GM12878 (cell line): ENCODE measurements at regions of chr5 and their contacts with region 1.

Region 1: DNA sequence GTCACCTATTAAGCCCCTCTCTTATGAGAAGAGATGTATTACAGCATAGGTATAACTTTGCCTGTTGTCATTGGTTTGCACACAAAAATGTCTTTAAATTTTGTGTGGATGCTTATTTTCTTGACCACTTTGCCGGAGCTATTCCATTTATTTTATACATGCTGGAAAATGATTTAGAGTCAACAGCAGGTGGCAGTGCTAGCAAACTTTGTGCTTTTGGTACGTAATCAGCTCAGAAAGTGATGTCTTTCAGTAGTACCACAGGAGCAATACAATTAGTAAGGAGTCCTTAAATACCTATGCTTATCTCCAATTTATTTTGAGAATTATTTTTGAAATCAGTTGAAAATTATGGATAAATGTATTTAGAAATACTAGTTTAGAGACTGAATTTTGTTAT is 19.8 kb upstream of the NUDT12 start:
- DNase-seq: peak; percentile 5
- ATAC-seq: peak; percentile 63
- H3K4me3 ChIP-seq: no peak overlapping the region
- H3K27ac ChIP-seq: no peak overlapping the region
- H3K4me1 ChIP-seq: no peaks in the 10 kb centered on the region
- H3K27me3 ChIP-seq: no peaks in the 10 kb centered on the region
- CTCF ChIP-seq: peak; percentile 35 to 49 (median 42); a peak in 5 of 6 replicates
- EP300 ChIP-seq: no peak
- POLR2A ChIP-seq: no peak
- RAD21 ChIP-seq: peak; percentile 64

Region 2: GRCh38 chr5:103393101-103393754 is 189.1 kb before region 1 on chr5:
- CTCF ChIA-PET with region 1: no interaction called
- POLR2A ChIA-PET with region 1: no interaction called
- RAD21 ChIA-PET with region 1: no interaction called
- SMC1A ChIA-PET with region 1: no interaction called
- in situ Hi-C with region 1: no loop called
- intact Hi-C with region 1: no loop called
- DNase-seq: peak; percentile 3
- ATAC-seq: peak; percentile 31
- H3K4me3 ChIP-seq: no peak overlapping the region
- H3K27ac ChIP-seq: no peak overlapping the region
- H3K4me1 ChIP-seq: no peaks in the 10 kb centered on the region
- H3K27me3 ChIP-seq: peaks cover 0 to 2% of the 10 kb centered on the region in 2 experiments; a peak in 1 of 4 replicates
- CTCF ChIP-seq: no peak
- EP300 ChIP-seq: no peak
- POLR2A ChIP-seq: no peak
- RAD21 ChIP-seq: no peak

Region 3: GRCh38 chr5:103414622-103415021 is 167.7 kb before region 1 on chr5:
- CTCF ChIA-PET with region 1: no interaction called
- POLR2A ChIA-PET with region 1: no interaction called
- RAD21 ChIA-PET with region 1: no interaction called
- SMC1A ChIA-PET with region 1: no interaction called
- in situ Hi-C with region 1: no loop called
- intact Hi-C with region 1: no loop called
- DNase-seq: no peak
- ATAC-seq: no peak
- H3K4me3 ChIP-seq: no peak overlapping the region
- H3K27ac ChIP-seq: no peak overlapping the region
- H3K4me1 ChIP-seq: no peaks in the 10 kb centered on the region
- H3K27me3 ChIP-seq: no peaks in the 10 kb centered on the region
- CTCF ChIP-seq: no peak
- EP300 ChIP-seq: no peak
- POLR2A ChIP-seq: no peak
- RAD21 ChIP-seq: no peak

Region 4: DNA sequence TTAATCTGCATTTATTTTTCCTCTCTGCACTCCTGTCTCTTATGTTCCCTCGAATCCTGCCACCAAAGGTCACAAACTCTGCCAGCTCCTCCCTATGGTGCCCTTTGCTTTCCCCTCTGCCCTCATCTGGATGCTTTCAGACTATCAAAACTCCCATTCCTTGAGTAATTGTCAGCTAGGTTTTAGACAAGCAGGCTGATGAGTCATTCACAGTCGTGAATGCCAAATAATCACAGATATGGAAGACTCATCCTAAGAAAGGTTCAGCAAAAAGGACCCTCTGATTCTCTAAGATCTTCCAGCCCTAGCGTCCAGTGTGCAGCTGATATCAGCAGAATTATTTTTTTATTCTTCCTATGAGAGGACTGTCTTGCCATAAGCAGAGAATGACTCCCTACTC is 84.7 kb after region 1 on chr5:
- CTCF ChIA-PET with region 1: no interaction called
- POLR2A ChIA-PET with region 1: no interaction called
- RAD21 ChIA-PET with region 1: no interaction called
- SMC1A ChIA-PET with region 1: no interaction called
- in situ Hi-C with region 1: no loop called
- intact Hi-C with region 1: no loop called
- DNase-seq: no peak
- ATAC-seq: no peak
- H3K4me3 ChIP-seq: no peak overlapping the region
- H3K27ac ChIP-seq: no peak overlapping the region
- H3K4me1 ChIP-seq: no peaks in the 10 kb centered on the region
- H3K27me3 ChIP-seq: no peaks in the 10 kb centered on the region
- CTCF ChIP-seq: no peak
- EP300 ChIP-seq: no peak
- POLR2A ChIP-seq: no peak
- RAD21 ChIP-seq: no peak

Region 5: GRCh38 chr5:103758996-103759395 is 176.6 kb after region 1 on chr5:
- CTCF ChIA-PET with region 1: no interaction called
- POLR2A ChIA-PET with region 1: no interaction called
- RAD21 ChIA-PET with region 1: no interaction called
- SMC1A ChIA-PET with region 1: no interaction called
- in situ Hi-C with region 1: no loop called
- intact Hi-C with region 1: no loop called
- DNase-seq: no peak
- ATAC-seq: no peak
- H3K4me3 ChIP-seq: no peak overlapping the region
- H3K27ac ChIP-seq: no peak overlapping the region
- H3K4me1 ChIP-seq: no peaks in the 10 kb centered on the region
- H3K27me3 ChIP-seq: no peaks in the 10 kb centered on the region
- CTCF ChIP-seq: no peak
- EP300 ChIP-seq: no peak
- POLR2A ChIP-seq: no peak
- RAD21 ChIP-seq: no peak

Region 6: DNA sequence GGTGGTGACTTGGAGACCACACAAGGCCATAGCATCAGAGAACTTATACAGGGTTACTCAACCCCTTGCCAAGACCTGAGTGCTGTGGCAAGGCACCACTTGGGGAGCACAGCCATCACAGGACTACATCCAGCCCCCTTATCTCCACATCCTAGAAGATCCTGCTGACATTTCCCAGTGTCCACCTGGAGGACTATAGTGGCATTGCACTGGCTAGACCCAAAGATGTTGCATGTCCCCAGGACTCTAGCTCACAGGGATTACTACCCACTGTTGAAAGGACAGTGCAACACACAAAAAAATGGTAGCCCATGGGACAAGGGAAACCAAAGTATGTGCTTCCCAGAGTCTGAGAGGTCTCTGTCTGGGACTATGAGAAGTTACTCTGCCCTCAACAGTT is 391.3 kb after region 1 on chr5:
- CTCF ChIA-PET with region 1: no interaction called
- POLR2A ChIA-PET with region 1: no interaction called
- RAD21 ChIA-PET with region 1: no interaction called
- SMC1A ChIA-PET with region 1: no interaction called
- in situ Hi-C with region 1: no loop called
- intact Hi-C with region 1: loop called (anchors 10 kb)
- DNase-seq: no peak
- ATAC-seq: peak; percentile 63
- H3K4me3 ChIP-seq: no peak overlapping the region
- H3K27ac ChIP-seq: no peak overlapping the region
- H3K4me1 ChIP-seq: no peaks in the 10 kb centered on the region
- H3K27me3 ChIP-seq: no peaks in the 10 kb centered on the region
- CTCF ChIP-seq: peak in 1 of 3 experiments; percentile 26; a peak in 1 of 6 replicates
- EP300 ChIP-seq: no peak
- POLR2A ChIP-seq: no peak
- RAD21 ChIP-seq: no peak

Region 7: GRCh38 chr5:104184264-104184663 is 601.9 kb after region 1 on chr5:
- CTCF ChIA-PET with region 1: interaction called, 41 read pairs
- POLR2A ChIA-PET with region 1: no interaction called
- RAD21 ChIA-PET with region 1: interaction called, 17 read pairs
- SMC1A ChIA-PET with region 1: interaction called, 14 read pairs
- in situ Hi-C with region 1: loop called (anchors 5 kb)
- intact Hi-C with region 1: loop called (anchors 1 kb)
- DNase-seq: no peak
- ATAC-seq: no peak
- H3K4me3 ChIP-seq: no peak overlapping the region
- H3K27ac ChIP-seq: no peak overlapping the region
- H3K4me1 ChIP-seq: no peaks in the 10 kb centered on the region
- H3K27me3 ChIP-seq: no peaks in the 10 kb centered on the region
- CTCF ChIP-seq: no peak
- EP300 ChIP-seq: no peak
- POLR2A ChIP-seq: no peak
- RAD21 ChIP-seq: no peak

Region 8: GRCh38 chr5:104412649-104413246 is 830.4 kb after region 1 on chr5:
- CTCF ChIA-PET with region 1: interaction called, 4 read pairs
- POLR2A ChIA-PET with region 1: no interaction called
- RAD21 ChIA-PET with region 1: no interaction called
- SMC1A ChIA-PET with region 1: no interaction called
- in situ Hi-C with region 1: no loop called
- intact Hi-C with region 1: loop called (anchors 5 kb)
- DNase-seq: no peak
- ATAC-seq: peak; percentile 88
- H3K4me3 ChIP-seq: no peak overlapping the region
- H3K27ac ChIP-seq: no peak overlapping the region
- H3K4me1 ChIP-seq: no peaks in the 10 kb centered on the region
- H3K27me3 ChIP-seq: no peaks in the 10 kb centered on the region
- CTCF ChIP-seq: peak in 2 of 3 experiments; percentile 43 to 46; a peak in 3 of 6 replicates
- EP300 ChIP-seq: no peak
- POLR2A ChIP-seq: no peak
- RAD21 ChIP-seq: peak; percentile 41